OCI-LY7 (cell line): ENCODE measurements at regions of chr19 and their contacts with region 1.

Region 1: GRCh38 chr19:8355631-8356402 is 8.1 kb upstream of the ANGPTL4 start:
- DNase-seq: no peak
- H3K4me3 ChIP-seq: no peak overlapping the region
- H3K27ac ChIP-seq: no peak overlapping the region
- H3K4me1 ChIP-seq: no peaks in the 10 kb centered on the region
- CTCF ChIP-seq: no peak

Region 2: DNA sequence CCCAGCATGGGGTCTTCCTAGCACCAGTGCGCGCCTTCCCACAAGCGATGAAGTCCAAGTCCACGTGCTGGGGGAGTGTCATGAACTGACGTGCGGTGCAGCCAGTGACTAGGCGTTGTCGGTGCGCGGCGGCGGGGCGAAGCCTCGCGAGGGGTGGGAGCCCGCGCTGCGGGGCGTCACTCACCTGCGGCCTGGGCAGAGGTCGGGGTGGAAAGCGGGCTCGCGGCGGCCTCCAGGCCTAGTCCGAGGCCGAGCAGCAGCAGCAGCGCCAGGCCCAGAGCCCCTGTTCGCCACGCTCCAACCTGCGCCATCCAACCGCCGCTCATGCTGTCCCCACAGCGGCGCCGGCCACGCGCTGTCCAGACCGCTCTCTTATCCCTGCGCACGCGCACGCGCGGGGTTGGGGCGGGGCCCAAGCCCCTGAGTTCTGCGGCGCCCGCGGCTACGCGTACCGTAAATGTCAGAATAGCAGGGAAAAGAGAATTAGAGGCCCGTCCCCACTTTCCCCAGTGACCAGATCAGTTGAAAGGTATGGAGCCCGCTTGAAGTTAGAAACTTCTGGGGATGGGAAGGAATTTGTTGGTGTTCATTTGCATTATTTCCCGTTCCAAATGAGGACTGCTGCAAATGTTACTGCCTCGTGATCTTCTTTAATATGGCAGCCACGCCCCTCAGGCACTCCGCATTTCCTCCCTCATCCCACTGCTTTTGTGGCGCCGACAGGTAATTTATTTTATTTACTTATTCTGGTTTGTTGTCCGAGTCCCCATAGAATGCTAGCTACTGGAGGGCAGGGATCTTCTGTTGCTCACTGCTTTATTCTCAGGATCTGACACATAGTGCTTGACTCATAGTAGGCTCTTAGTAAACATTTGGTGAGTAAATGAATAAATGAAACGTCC is 47.6 kb before region 1 on chr19 and contains the start of gene CD320:
- CTCF ChIA-PET with region 1: no interaction called
- POLR2A ChIA-PET with region 1: no interaction called
- intact Hi-C with region 1: no loop called
- DNase-seq: peak; percentile 90
- H3K4me3 ChIP-seq: peak within 1 kb of the TSS; percentile 77
- H3K27ac ChIP-seq: peak within 1 kb of the TSS; percentile 56
- H3K4me1 ChIP-seq: peaks cover 19% of the 10 kb centered on the region
- CTCF ChIP-seq: no peak
- total RNA-seq, gene CD320: 39.0 and 49.2 TPM in 2 replicates

Region 3: DNA sequence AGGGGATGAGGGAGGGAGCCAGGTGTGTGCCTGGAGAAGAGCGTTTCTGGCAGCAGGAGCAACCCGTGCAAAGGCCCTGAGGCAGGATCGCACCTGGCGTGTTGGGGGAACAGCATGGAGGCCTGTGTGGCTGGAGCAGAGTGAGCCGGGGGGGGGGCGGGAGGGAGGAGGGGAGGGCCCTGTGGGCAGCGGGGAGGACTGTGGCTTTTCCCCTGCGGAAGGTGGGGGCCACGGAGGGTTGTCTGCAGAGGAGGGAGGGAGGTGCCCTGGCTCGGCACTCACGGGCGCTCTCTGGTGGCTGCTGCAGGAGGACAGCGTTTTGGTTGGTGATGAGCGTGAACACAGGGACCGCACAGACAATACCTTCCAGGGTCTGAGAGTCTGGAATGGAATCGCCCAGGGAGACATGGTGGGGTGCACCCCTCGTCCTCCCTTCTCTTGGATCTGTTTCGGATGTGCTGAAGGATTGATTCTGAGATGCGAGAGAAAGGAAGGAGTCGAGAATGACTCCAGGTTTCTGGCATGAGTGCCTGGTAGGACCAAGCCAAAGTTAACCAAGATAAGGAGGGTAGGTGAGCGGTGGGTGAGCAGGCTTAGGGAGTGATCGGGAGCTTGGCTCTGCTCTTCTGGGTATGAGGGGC is 40.9 kb after region 1 on chr19:
- CTCF ChIA-PET with region 1: no interaction called
- POLR2A ChIA-PET with region 1: no interaction called
- intact Hi-C with region 1: loop called (anchors 2 kb)
- DNase-seq: peak; percentile 61
- H3K4me3 ChIP-seq: no peak overlapping the region
- H3K27ac ChIP-seq: no peak overlapping the region
- H3K4me1 ChIP-seq: peaks cover 5% of the 10 kb centered on the region
- CTCF ChIP-seq: peak; percentile 80

Region 4: DNA sequence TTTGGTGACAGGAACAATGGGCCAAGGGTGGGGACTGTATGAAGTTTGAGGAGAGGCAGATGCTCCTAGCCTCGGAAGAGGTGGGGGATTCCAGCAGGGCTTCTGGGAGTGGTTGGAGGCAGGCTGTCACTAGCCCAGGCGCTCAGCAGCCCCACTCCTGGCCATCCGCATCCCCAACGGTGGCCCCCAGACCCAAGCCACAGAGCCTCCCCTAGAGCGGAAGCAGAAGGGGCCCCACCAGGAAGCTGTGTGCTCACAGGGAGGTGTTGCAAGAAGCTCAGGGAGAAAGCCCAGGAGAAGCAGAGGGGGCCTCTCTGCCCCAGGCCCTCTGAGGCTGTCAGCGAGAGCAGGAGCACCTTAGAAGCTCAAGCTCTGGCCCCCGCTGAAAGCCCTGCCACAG is 138.3 kb after region 1 on chr19:
- CTCF ChIA-PET with region 1: no interaction called
- POLR2A ChIA-PET with region 1: no interaction called
- intact Hi-C with region 1: no loop called
- DNase-seq: peak; percentile 45
- H3K4me3 ChIP-seq: peak overlapping the region; percentile 19
- H3K27ac ChIP-seq: no peak overlapping the region
- H3K4me1 ChIP-seq: peaks cover 13% of the 10 kb centered on the region
- CTCF ChIP-seq: no peak

Region 5: DNA sequence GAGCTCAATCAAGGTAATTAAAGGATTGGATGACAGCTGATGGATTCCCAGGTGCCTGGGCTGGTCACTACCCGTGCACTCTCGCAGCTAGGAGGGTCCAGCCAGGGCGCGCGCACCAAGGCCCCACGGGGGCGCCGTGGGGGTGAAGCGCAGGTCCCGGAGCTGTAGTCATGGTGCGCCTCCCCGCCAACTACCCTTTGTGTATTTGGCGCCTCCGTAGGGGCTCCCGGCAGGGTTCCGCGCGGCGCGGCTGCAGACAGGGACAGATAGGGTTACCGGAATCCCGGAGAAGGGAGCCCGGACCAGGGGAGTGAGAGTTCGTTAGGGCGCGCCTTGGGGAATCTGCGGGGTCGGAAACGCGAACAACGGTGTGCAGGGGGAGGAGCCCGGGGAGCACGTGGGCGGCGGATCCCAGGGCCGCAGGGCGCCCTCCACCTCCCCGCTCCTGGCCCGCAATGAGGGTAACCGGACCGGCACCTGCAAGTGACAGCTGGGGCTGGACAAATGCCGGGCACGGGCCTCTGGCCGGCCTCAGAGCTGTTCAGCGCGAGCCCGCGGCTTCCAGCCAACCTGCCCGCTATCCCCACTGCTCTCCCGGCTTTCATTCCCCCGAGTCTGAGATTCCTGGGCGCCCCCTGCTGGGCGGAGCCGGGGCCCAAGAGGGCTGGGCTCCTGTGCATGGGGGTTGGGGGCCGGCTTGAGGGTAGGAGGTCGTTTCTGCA is 150.0 kb after region 1 on chr19:
- CTCF ChIA-PET with region 1: no interaction called
- POLR2A ChIA-PET with region 1: no interaction called
- intact Hi-C with region 1: loop called (anchors 2 kb)
- DNase-seq: peak; percentile 83
- H3K4me3 ChIP-seq: peak overlapping the region; percentile 71
- H3K27ac ChIP-seq: peak overlapping the region; percentile 47
- H3K4me1 ChIP-seq: peaks cover 13% of the 10 kb centered on the region
- CTCF ChIP-seq: peak; percentile 94

Region 6: GRCh38 chr19:8580710-8581281 is 225.0 kb after region 1 on chr19:
- CTCF ChIA-PET with region 1: no interaction called
- POLR2A ChIA-PET with region 1: no interaction called
- intact Hi-C with region 1: loop called (anchors 2 kb)
- DNase-seq: peak; percentile 84
- H3K4me3 ChIP-seq: no peak overlapping the region
- H3K27ac ChIP-seq: no peak overlapping the region
- H3K4me1 ChIP-seq: peaks cover 18% of the 10 kb centered on the region
- CTCF ChIP-seq: peak; percentile 98

Region 7: DNA sequence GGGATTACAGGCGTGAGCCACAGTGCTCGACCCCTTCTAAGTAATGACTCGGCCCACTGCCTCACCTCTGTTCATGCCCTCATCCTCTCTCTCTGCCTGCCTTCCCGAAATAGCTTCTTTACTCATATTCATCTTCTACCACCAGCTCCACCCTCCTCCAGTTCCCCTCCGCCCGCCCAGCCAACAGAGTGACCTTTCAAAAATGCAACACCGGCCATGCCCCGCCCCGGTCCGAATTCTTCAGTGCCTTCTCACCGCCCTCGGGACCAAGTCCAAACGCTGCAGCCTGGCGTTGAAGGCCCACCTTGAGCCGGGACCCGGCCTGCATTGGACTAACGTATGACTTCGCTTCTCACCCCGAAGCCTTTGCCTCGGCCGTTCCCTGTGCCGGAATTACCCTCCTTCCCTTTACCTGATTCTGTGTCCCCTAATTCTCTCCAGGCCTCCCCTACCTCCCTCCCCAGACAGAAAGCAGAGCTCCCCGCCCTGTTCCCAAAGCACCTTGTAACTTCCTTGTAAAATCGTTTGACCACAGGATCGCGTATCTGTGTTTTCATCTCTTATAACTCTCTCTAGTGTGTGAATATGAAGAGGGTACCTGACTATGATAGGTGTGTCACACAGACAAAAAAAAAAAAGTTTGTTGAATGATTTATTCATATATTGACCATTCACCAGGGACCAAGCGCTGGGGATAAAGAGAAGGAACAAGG is 662.5 kb after region 1 on chr19:
- CTCF ChIA-PET with region 1: no interaction called
- POLR2A ChIA-PET with region 1: no interaction called
- intact Hi-C with region 1: no loop called
- DNase-seq: no peak
- H3K4me3 ChIP-seq: no peak overlapping the region
- H3K27ac ChIP-seq: no peak overlapping the region
- H3K4me1 ChIP-seq: no peaks in the 10 kb centered on the region
- CTCF ChIP-seq: no peak